A549 (cell line): ENCODE measurements at regions of chr12 and their contacts with region 1.

Region 1: GRCh38 chr12:50720085-50720484 is 43.8 kb upstream of the ATF1 start:
- DNase-seq: no peak
- ATAC-seq: no peak
- H3K4me3 ChIP-seq: no peak overlapping the region
- H3K27ac ChIP-seq: no peak overlapping the region
- H3K4me1 ChIP-seq: no peaks in the 10 kb centered on the region
- CTCF ChIP-seq: no peak
- EP300 ChIP-seq: no peak
- POLR2A ChIP-seq: no peak
- RAD21 ChIP-seq: no peak

Region 2: GRCh38 chr12:50734409-50735263 is 14.6 kb after region 1 on chr12:
- CTCF ChIA-PET with region 1: interaction called, 16 read pairs
- POLR2A ChIA-PET with region 1: no interaction called
- DNase-seq: peak; percentile 51 to 52
- ATAC-seq: peak; percentile 88 to 89
- H3K4me3 ChIP-seq: no peak overlapping the region
- H3K27ac ChIP-seq: no peak overlapping the region
- H3K4me1 ChIP-seq: peaks cover 9% of the 10 kb centered on the region; the same call in 2 of the 3 replicates
- CTCF ChIP-seq: peak; percentile 70
- EP300 ChIP-seq: no peak
- POLR2A ChIP-seq: no peak
- RAD21 ChIP-seq: peak; percentile 67 to 72

Region 3: DNA sequence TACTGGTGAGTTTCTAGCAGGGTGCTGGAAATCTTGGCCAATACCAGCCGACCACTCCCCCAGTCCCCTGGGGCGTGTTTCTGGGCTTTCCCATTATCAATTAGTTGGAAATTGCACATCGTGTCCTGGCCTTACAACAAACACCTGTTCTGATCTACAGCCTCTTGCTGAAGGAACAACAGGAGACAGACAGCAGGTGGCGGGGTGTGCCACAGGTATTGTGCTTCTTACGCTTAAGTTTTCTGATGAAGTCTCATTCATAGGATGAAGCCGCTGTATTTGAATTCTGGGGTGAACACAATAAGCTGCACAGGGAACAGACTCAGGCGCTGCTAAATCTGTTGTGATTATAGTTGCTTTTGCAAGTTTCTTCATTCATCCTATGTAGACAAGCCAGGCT is 233.0 kb after region 1 on chr12:
- CTCF ChIA-PET with region 1: no interaction called
- POLR2A ChIA-PET with region 1: no interaction called
- DNase-seq: no peak
- ATAC-seq: no peak
- H3K4me3 ChIP-seq: no peak overlapping the region
- H3K27ac ChIP-seq: no peak overlapping the region
- H3K4me1 ChIP-seq: no peaks in the 10 kb centered on the region
- CTCF ChIP-seq: no peak
- EP300 ChIP-seq: no peak
- POLR2A ChIP-seq: no peak
- RAD21 ChIP-seq: 0 out of 5 replicates have a peak, but pooled peaks of 1 of the 2 experiments have one; percentile 2